ENCODE measurements at regions of chr7 and their contacts with region 1.

Region 1: GRCh38 chr7:15720849-15721471 is 34.5 kb upstream of the MEOX2 start:
- DNase-seq: no peak
- H3K4me3 ChIP-seq: no peak overlapping the region
- CTCF ChIP-seq: peak; percentile 52

Region 2: DNA sequence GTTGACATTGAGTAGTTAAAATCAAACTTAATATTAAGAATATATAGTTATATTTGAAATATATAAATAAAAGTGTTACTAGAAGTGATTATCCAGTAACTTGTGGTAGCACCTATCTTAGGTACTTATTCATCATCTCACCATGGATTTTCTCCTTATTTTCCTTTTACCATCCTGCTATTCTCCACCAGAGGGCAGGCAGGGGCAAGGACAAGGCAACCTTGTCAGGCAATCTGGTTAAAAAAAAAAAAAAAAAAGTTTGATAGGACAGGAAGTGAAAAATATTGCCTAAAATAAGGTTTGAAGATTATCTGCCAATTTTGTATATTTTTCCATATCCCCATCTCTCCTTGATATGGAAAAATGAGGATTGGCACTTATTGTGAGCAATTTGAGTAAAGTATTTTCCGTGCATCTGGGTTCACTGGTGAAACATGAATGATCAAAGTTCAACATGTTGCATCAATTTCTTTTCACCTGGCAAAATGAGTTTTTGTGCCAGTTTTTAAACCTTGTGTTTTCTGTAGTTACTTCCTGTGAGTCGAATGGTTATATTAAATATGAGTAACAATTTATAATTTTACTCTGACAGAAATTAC is 415.9 kb before region 1 on chr7:
- CTCF ChIA-PET with region 1: interaction called, 23 read pairs
- POLR2A ChIA-PET with region 1: no interaction called
- DNase-seq: no peak
- H3K4me3 ChIP-seq: no peak overlapping the region
- CTCF ChIP-seq: peak; percentile 68

Region 3: DNA sequence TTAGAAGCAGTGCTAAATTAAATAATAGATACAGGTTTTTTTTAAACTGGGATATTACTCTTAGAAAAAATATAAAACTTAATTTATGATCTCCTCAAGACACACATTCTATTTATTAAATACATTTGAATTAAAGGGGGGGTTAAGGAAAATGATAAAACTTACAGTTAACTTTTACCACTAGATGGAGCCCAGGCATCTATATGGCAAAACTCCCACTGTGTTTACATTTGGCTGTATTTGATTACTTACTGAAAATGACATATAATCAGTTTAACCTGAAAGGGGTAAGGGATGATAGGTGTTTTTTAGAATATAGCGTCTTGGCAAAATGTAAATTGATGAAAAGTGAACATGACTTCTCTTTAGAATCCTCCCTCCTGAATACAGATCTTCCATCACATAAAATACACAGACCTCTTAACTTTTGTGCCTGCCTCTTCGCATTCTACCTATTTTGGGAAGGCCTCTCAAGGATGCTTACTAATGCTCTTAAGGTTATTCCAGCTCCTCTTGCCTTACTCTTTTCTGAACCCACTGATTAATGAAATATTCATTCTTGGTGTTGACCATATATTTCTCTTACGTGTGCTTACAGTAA is 394.8 kb before region 1 on chr7:
- CTCF ChIA-PET with region 1: interaction called, 23 read pairs
- POLR2A ChIA-PET with region 1: no interaction called
- DNase-seq: no peak
- H3K4me3 ChIP-seq: no peak overlapping the region
- CTCF ChIP-seq: peak; percentile 43

Region 4: GRCh38 chr7:15709978-15710377 is 11.0 kb before region 1 on chr7:
- CTCF ChIA-PET with region 1: interaction called, 28 read pairs
- POLR2A ChIA-PET with region 1: no interaction called
- DNase-seq: no peak
- H3K4me3 ChIP-seq: no peak overlapping the region
- CTCF ChIP-seq: no peak

Region 5: DNA sequence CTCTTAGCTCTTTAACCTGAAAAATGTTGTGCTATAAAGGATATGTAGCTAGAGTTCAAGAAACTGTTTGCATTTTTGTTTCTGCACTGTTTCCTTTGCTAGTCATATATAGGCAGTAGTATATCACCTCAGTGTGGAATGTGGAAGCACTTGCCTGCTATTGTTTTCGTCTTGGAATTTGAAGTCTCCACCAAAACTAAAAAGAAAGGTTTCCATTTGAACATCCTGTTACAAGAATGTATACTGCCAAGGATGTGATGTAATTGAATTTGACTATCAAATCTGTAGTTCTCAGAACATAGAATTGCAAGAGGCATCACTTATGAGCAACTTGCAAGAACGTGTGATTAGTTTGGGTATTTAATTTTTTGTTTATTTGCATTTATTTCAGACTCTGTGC is 16.6 kb after region 1 on chr7:
- CTCF ChIA-PET with region 1: interaction called, 12 read pairs
- POLR2A ChIA-PET with region 1: no interaction called
- DNase-seq: no peak
- H3K4me3 ChIP-seq: no peak overlapping the region
- CTCF ChIP-seq: no peak

Region 6: GRCh38 chr7:15747301-15747700 is 26.3 kb after region 1 on chr7:
- CTCF ChIA-PET with region 1: interaction called, 12 read pairs
- POLR2A ChIA-PET with region 1: no interaction called
- DNase-seq: no peak
- H3K4me3 ChIP-seq: no peak overlapping the region
- CTCF ChIP-seq: no peak

Region 7: GRCh38 chr7:16071246-16071857 is 350.4 kb after region 1 on chr7:
- CTCF ChIA-PET with region 1: interaction called, 19 read pairs
- POLR2A ChIA-PET with region 1: no interaction called
- DNase-seq: no peak
- H3K4me3 ChIP-seq: no peak overlapping the region
- CTCF ChIP-seq: peak; percentile 49